Astrocyte of the cerebellum (primary cell): ENCODE measurements at regions of chr14 and their contacts with region 1.

Region 1: DNA sequence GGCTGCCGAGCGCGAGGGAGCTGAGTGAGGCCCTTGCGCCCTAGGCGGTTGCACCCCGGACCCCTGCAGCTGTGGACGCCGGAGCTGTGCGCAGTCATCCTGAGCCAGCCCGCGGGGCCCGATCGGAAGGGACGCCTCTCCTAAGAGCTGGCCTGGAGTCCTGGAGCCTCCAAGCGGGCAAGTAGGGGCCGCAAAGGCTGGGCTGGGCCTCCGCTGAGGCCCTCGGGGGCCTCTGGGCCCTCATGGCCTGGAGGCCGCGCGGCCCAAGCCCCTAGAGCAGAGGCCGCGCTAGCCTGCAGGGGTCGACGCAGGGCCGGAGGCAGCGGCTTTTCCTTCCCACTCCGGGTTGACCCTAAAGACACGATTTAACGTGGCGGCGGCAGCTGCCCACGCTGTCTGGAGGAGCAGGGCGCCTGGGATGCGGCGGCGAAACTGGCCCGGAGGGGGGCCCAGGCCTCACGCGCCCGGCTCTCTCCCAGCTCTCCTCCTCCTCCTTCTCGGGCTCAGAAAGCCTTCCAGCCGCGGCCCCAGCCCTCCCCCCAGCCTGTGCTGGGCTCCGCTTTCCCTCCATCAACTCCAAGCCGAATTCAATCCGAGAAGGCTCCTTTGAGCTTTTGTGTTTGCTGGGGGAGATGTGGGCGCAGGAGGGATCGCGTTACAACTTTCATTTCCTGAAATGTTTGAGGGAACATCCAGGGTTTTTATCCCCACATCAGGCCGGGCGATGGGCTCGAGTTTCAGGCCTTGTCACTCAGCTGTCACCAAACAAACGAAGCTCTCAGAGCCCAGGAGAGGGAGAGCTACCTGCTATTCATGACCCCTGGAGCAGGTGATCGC is 11.6 kb downstream of the SIX1 start:
- DNase-seq: no peak
- H3K4me3 ChIP-seq: peak overlapping the region; percentile 10
- CTCF ChIP-seq: no peak

Region 2: DNA sequence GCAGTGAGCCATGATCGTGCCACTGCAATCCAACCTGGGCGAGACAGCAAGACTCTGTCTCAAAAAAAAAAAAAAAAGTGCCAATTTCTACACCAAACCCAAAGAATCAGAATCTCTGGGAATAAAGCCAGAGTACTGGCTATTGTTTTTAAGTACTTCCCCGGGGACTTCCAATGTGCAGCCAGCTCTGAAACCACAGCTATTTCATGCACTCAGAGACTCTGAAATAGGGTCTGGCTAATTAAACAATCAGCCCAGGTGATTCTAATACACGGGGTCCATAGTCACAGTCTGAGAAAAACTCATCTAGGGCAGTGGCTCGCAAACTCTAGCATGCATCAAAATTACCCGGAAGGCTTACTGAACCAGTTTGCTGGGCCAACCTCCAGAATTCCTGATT is 72.5 kb before region 1 on chr14:
- in situ Hi-C with region 1: loop called (anchors 5 kb)
- DNase-seq: peak; percentile 95
- H3K4me3 ChIP-seq: no peak overlapping the region
- CTCF ChIP-seq: no peak

Region 3: GRCh38 chr14:61269321-61270083 is 631.8 kb after region 1 on chr14:
- in situ Hi-C with region 1: loop called (anchors 10 kb)
- DNase-seq: peak; percentile 54
- H3K4me3 ChIP-seq: peak overlapping the region; percentile 31
- CTCF ChIP-seq: peak; percentile 73